ENCODE measurements at regions of chr1 and their contacts with region 1.

Region 1: DNA sequence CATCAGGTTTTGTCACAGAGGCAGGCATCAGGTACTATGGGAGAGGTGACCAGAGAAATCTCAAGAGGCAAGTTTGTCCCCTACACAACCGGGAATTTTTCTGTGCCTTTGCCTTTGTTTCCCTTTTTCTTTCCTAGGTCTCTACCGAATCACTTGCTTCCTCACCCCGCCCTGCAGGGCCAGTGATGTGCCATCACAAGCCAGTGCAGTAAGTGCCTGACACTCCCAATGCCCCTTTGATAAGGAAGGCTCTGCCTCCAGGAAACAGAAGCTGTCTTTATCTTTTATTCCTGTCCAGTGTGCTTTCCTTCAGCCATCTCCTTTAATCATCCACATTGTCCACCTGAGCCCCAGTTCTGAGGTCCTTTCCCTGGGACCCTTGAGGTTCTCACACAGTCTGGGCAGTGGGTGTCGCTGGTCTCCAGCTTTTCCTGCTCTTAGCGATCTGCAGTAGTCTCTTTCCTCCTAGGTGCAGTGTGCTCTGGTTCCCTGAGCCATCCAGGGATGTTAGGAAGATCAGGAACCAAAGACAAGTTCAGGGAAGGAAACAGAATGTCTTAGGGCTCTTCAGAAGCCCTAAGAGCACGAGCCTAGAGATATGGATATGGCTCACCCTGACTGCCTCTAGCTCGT is 36.6 kb downstream of the GJA5 start:
- DNase-seq: peak; percentile 24 to 54 (median 40)
- ATAC-seq: peak; percentile 76
- H3K4me3 ChIP-seq: no peak overlapping the region
- H3K4me1 ChIP-seq: no peaks in the 10 kb centered on the region
- CTCF ChIP-seq: no peak

Region 2: DNA sequence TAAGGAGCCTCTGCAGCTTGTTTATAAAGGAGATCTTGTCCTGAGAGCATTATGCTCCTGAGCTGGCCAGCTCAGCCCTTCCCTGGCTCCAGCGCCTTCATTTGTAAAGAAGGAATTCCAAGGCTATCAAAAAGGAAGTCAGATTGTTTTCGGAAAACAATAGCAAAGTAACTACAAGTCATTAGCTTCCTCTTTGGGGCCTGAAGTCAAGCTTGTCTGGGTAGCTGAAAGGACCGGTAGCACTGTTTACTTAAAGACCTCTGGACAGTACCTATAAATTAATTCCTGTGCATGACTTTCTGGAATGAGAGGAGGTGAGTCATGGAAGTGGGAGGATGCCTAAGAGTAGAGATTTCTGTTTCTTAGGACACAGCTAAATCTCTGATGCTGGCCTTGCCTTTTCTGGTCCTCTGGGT is 57.3 kb after region 1 on chr1:
- intact Hi-C with region 1: no loop called
- DNase-seq: no peak
- ATAC-seq: no peak
- H3K4me3 ChIP-seq: no peak overlapping the region
- H3K4me1 ChIP-seq: no peaks in the 10 kb centered on the region
- CTCF ChIP-seq: no peak

Region 3: DNA sequence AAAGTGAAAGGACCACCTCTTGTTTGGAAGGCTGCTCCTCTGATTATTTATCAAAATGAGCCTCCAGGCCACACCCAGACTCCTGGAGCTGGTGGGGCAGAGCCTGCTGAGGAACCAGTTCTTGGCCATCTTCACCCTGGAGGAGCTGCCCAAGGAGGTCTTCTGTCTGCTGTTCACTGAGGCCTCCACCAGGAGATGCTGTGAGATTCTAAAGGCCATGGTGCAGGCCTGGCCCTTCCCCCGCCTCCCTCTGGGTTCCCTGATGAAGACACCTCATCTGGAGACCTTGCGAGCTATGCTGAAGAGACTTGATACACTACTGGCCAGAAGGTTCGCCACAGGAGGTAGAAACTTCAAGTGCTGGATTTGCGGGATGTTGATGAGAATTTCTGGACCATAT is 117.1 kb after region 1 on chr1:
- intact Hi-C with region 1: no loop called
- DNase-seq: no peak
- ATAC-seq: no peak
- H3K4me3 ChIP-seq: no peak overlapping the region
- H3K4me1 ChIP-seq: no peaks in the 10 kb centered on the region
- CTCF ChIP-seq: no peak

Region 4: DNA sequence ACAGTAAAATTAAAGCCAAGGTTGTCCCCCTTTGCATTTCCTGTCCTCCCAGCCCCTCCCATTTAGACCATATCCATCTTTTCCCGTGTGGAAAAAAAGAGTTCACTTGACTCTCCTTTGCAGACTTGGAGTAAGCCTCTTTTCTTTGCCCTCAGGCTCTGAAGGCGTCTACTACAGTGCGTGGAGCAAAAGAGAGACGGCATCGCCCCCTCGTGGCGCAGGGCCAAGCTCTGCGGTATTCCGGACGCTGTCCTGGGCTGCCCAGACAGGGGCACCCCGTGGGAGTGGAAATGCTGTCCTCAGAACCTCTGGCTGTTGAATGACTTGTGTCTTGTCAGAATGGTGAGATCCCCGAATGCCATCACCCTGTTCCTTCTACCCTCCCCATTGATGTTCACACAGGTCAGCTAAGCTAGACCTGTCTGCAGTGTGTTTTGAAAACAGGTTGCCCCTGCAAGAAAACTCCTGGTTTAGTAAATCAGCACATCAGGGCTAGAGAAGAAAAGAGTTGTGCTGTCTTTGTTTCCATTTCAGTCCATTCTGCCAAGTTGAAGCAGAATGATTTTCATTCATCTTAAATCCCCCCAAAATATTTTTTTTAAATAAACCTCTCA is 166.5 kb after region 1 on chr1:
- intact Hi-C with region 1: loop called in 1 of 2 experiments (anchors 5 kb)
- DNase-seq: peak; percentile 57 to 75 (median 70)
- ATAC-seq: peak; percentile 87
- H3K4me3 ChIP-seq: no peak overlapping the region
- H3K4me1 ChIP-seq: peaks cover 3% of the 10 kb centered on the region
- CTCF ChIP-seq: no peak

Region 5: DNA sequence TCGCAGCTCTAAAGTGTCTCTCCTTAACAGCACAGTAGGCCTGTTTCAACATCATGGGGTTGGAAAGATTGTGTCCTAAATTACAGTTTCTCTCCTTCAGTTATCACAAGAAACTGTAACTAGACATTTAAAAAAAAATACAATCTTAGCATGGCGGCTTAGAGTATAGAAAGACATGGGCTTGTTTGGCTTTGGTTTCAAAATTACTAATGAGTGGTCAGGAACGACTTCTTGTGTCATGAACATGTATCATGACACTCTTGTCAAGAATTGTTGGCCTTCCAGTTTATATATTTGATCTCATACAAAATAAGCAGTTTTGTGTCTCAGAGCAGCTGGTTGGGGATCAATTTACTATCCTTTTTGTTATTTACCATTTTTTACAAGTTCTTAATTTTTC is 180.9 kb after region 1 on chr1:
- intact Hi-C with region 1: no loop called
- DNase-seq: no peak
- ATAC-seq: no peak
- H3K4me3 ChIP-seq: no peak overlapping the region
- H3K4me1 ChIP-seq: no peaks in the 10 kb centered on the region
- CTCF ChIP-seq: no peak